Endothelial cell of umbilical vein (primary cell): ENCODE measurements at regions of chr10 and their contacts with region 1.

Region 1: DNA sequence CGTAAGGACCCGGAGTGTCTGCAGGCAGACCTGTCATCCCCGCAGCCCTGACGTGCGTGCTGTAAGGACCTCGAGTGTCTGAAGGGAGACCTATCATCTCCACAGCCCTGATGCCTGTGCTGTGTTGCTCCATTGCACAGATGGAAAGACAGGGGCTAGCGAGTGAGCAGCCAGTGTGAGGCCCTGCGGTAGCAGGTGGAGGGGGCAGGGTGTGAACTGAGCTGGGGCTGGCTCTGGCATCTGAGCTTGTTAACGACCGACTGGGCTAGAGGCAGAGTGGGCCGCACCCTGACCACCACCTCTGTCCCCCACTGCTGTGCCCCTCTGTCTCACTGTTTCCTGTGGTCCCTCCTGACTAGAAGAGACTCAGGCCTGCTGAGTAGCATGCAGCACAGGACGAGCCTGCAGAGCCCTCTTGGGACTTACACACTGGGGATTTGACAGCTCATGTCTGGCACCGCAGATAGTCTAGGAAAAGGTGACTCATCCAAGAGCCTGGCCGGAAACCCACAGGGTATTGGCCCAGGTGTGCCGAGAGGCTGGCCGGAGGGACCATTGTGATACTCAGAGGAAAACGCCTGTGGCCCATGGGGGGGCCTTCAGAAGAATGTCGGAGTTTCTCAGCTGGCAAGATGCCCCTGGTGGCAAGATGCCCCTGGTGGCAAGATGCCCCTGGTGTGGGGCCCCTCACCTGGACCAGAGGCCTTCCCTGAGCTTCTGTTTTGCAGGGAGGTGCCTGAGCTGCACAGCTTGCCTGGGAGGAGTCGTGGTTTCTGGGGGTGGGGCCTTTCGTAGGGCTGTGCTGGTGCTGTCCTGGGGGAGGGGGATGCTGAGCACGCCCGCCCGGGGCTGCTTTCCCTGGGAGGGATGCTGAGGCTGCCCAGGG is 34.3 kb downstream of the INPP5A start:
- DNase-seq: peak; percentile 75
- H3K4me3 ChIP-seq: no peak overlapping the region
- H3K27ac ChIP-seq: no peak overlapping the region
- H3K4me1 ChIP-seq: peaks cover 27% of the 10 kb centered on the region
- H3K27me3 ChIP-seq: no peaks in the 10 kb centered on the region
- CTCF ChIP-seq: peak; percentile 4
- POLR2A ChIP-seq: no peak

Region 2: DNA sequence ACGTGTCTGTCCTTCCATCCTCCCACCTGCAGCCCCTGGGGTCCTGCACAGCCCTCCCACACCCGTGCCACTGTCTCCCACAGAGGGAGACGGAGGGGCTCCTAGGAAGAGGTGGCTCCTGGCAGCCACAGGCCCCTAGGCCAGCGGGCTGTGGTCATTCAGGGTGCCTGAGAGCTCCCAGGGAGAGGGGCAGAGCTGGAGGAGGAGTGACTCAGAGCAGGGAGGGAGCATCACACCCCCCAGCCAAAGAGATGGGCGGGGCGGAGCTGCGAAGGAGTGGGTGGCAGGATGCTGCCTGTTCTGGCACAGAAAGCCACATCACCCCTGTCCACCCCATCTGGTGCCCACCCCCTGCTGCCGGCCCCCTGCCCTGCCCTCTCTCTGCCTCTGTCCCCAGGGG is 314.6 kb before region 1 on chr10:
- CTCF ChIA-PET with region 1: no interaction called
- POLR2A ChIA-PET with region 1: no interaction called
- dilution Hi-C with region 1: no loop called
- intact Hi-C with region 1: no loop called
- DNase-seq: no peak
- H3K4me3 ChIP-seq: no peak overlapping the region
- H3K27ac ChIP-seq: no peak overlapping the region
- H3K4me1 ChIP-seq: no peaks in the 10 kb centered on the region
- H3K27me3 ChIP-seq: no peaks in the 10 kb centered on the region
- CTCF ChIP-seq: no peak
- POLR2A ChIP-seq: no peak

Region 3: GRCh38 chr10:132489087-132489703 is 82.7 kb before region 1 on chr10:
- CTCF ChIA-PET with region 1: no interaction called
- POLR2A ChIA-PET with region 1: no interaction called
- dilution Hi-C with region 1: no loop called
- intact Hi-C with region 1: no loop called
- DNase-seq: no peak
- H3K4me3 ChIP-seq: no peak overlapping the region
- H3K27ac ChIP-seq: no peak overlapping the region
- H3K4me1 ChIP-seq: no peaks in the 10 kb centered on the region
- H3K27me3 ChIP-seq: no peaks in the 10 kb centered on the region
- CTCF ChIP-seq: no peak
- POLR2A ChIP-seq: no peak

Region 4: DNA sequence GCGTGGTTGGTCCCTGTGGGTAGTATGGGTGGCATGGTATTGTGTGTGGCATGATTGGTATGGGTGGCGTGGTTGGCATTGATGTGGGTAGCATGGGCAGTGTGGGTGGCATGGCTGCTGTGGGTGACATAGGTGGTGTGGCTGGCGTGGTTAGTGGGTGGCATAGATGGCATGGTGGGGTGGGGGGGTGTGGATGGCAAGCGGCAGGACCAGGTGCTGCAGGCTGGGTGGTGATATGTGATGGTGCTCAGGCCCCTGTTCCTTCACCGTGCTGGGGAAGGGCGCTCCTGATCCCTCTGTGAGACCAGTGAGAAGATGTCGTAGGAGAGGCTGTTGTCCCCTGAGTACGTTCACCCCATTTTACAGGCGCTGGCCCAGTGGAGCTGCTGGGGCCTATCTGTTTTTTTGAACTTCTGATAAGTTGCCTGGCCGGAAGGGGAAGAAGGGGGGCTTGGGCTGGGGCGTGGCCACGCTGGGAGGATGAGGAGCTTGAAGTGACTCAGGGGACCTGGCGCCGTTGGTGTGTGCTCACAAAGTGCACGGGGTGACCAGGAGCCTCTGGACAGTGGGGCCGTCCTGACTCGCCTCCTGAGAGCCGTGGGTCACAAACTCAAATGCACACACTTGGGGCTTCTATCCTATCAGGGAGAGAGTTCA is 16.8 kb before region 1 on chr10:
- CTCF ChIA-PET with region 1: interaction called, 3 read pairs
- POLR2A ChIA-PET with region 1: no interaction called
- dilution Hi-C with region 1: no loop called
- intact Hi-C with region 1: loop called (anchors 2 kb)
- DNase-seq: no peak
- H3K4me3 ChIP-seq: no peak overlapping the region
- H3K27ac ChIP-seq: no peak overlapping the region
- H3K4me1 ChIP-seq: no peaks in the 10 kb centered on the region
- H3K27me3 ChIP-seq: no peaks in the 10 kb centered on the region
- CTCF ChIP-seq: no peak
- POLR2A ChIP-seq: no peak

Region 5: DNA sequence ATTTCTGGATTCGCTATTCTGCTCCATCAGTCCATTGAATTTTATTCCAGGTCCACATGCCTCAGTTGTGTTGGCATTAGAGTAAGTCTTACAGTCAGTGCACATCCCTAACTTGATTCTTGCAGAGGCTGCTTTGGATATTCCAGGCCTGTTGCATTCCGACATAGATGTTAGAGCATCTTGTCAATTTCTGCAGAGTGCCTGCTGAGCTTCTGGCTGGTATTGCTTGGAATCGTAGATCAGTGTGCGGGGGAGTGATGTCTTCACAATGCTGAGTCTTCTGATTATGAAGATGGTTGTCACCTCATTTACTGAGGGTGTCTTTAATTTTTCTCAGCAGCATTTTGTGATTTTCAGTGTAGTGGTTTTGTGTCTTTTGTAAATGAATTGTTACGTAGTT is 10.9 kb after region 1 on chr10:
- CTCF ChIA-PET with region 1: interaction called, 7 read pairs
- POLR2A ChIA-PET with region 1: no interaction called
- dilution Hi-C with region 1: no loop called
- intact Hi-C with region 1: loop called (anchors 1 kb)
- DNase-seq: no peak
- H3K4me3 ChIP-seq: no peak overlapping the region
- H3K27ac ChIP-seq: no peak overlapping the region
- H3K4me1 ChIP-seq: peaks cover 6% of the 10 kb centered on the region
- H3K27me3 ChIP-seq: no peaks in the 10 kb centered on the region
- CTCF ChIP-seq: no peak
- POLR2A ChIP-seq: no peak

Region 6: DNA sequence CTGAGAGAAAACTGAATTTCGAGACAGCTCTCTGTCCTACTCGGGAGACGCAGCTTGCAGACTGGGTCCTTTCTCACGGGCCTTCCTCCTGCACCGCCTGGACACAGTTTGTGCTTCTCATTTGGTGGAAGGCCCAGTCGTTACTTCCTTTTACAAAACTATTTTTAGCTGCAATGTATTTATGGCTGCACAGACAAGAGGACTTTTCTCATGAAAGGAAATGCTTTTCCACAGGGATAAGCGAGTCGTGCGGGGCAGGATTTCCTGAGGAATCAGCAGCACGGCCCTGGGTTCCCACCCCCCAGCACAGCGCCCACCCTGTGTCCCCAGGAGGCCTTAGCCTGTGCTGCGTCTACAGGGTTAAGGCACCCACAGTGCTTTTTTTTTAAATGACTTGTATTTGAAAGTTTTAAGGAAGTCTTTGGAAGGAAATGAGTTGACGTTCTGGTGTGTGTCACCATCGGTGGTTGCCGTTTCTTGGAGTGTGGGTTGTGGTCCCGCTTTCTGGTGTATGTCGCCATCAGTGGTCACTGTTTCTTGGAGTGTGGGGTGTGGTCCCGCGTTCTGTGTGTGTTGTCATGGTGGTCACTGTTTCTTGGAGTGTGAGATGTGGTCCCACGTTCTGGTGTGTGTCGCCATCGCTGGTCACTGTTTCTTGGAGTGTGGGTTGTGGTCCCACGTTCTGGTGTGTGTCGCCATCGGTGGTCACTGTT is 16.6 kb after region 1 on chr10:
- CTCF ChIA-PET with region 1: interaction called, 7 read pairs
- POLR2A ChIA-PET with region 1: no interaction called
- dilution Hi-C with region 1: no loop called
- intact Hi-C with region 1: loop called (anchors 1 kb)
- DNase-seq: peak; percentile 92
- H3K4me3 ChIP-seq: peak overlapping the region in 1 of 3 experiments; percentile 14
- H3K27ac ChIP-seq: peak overlapping the region; percentile 31
- H3K4me1 ChIP-seq: peaks cover 39% of the 10 kb centered on the region
- H3K27me3 ChIP-seq: no peaks in the 10 kb centered on the region
- CTCF ChIP-seq: no peak
- POLR2A ChIP-seq: no peak

Region 7: DNA sequence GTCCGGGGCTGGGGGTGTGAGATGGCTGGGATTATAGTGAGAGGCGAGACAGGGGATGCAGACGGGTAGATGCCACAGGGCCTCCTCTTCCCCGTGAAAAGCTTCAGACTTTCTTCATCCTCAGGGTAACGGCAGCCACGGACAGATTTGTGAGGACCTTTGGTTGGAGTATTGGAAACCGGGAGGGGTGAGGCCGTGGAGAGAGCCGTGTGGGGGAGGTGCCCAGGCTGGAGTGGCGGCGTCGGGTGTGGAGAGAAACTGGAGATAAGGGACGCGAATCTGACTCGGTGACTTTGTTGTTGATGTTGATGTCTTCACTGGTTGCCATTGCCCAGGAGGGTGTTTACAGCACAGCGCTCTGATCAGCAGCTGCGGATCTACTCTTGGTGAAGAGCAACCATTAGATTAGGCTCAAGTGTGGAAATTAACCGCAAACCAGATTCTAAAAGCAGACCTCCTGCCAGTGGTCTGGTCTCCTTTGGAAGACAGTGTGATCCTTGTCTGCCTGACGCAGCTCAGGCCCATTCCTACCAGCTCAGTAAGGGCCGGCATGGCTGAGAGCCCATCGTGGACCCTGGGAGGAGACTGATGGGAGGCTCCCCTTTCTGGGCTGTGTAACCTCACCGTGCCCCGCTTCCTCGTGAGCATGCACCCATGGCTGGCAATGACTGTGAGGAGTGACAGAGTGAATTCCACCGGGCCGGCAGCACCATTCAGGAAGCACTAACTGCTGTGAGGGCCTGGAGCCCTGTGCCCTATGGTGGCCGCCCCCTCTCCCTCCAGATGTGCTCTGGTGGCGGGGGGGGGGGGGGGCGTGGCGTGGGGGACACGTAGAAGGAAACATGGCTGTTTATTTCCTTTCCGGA is 56.0 kb after region 1 on chr10:
- CTCF ChIA-PET with region 1: no interaction called
- POLR2A ChIA-PET with region 1: no interaction called
- dilution Hi-C with region 1: no loop called
- intact Hi-C with region 1: loop called (anchors 5 kb)
- DNase-seq: peak; percentile 35
- H3K4me3 ChIP-seq: no peak overlapping the region
- H3K27ac ChIP-seq: no peak overlapping the region
- H3K4me1 ChIP-seq: peaks cover 12% of the 10 kb centered on the region
- H3K27me3 ChIP-seq: no peaks in the 10 kb centered on the region
- CTCF ChIP-seq: no peak
- POLR2A ChIP-seq: no peak